ENCODE measurements at regions of chr9 and their contacts with region 1.

Region 1: DNA sequence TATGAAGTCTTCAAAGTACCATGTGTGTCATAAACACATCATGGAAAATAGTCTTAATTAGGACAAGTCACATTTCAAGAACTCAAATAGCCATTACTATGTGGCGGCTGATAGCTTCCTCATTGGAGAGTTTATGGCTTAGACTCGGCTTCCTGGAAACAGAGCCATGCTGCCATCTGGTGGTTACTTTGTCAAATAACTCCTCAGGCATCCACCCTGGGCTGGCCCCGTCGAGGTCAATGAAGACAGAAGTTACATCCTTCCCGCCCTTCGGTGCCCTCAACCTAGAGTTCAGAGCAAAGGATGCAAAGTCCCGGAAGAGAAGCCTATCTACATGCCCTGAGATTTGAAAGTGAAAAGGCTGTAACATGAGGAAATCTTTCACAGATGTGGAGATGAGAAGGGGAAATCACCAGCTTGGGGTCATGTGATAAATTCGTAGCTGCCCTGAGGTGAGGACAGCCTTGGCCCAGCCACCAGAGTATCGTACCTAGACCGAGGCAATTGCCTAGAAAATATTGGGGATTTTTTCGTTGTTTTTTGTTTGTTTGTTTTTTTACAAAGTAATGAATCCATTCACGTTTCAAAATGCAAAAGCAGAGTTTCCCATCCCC is 45.5 kb upstream of the ZNF169 start:
- DNase-seq: peak; percentile 67 to 91 (median 79)
- H3K4me3 ChIP-seq: no peak overlapping the region
- H3K27ac ChIP-seq: no peak overlapping the region
- H3K4me1 ChIP-seq: no peaks in the 10 kb centered on the region
- H3K27me3 ChIP-seq: no peaks in the 10 kb centered on the region
- CTCF ChIP-seq: peak; percentile 57 to 94 (median 86)
- POLR2A ChIP-seq: no peak

Region 2: GRCh38 chr9:93682232-93682968 is 531.2 kb before region 1 on chr9:
- intact Hi-C with region 1: loop called in 1 of 2 experiments (anchors 10 kb)
- DNase-seq: peak; percentile 55 to 82 (median 68)
- H3K4me3 ChIP-seq: no peak overlapping the region
- H3K27ac ChIP-seq: no peak overlapping the region
- H3K4me1 ChIP-seq: no peaks in the 10 kb centered on the region
- H3K27me3 ChIP-seq: no peaks in the 10 kb centered on the region
- CTCF ChIP-seq: peak; percentile 68 to 88 (median 80)
- POLR2A ChIP-seq: no peak

Region 3: GRCh38 chr9:94014065-94014654 is 199.5 kb before region 1 on chr9:
- intact Hi-C with region 1: loop called (anchors 5 to 10 kb)
- DNase-seq: peak in 3 of 7 donors; percentile 12 to 34 (median 25)
- H3K4me3 ChIP-seq: no peak overlapping the region
- H3K27ac ChIP-seq: no peak overlapping the region
- H3K4me1 ChIP-seq: peaks cover 0 to 11% of the 10 kb centered on the region in 2 donors
- H3K27me3 ChIP-seq: no peaks in the 10 kb centered on the region
- CTCF ChIP-seq: peak; percentile 47 to 70 (median 60)
- POLR2A ChIP-seq: no peak

Region 4: DNA sequence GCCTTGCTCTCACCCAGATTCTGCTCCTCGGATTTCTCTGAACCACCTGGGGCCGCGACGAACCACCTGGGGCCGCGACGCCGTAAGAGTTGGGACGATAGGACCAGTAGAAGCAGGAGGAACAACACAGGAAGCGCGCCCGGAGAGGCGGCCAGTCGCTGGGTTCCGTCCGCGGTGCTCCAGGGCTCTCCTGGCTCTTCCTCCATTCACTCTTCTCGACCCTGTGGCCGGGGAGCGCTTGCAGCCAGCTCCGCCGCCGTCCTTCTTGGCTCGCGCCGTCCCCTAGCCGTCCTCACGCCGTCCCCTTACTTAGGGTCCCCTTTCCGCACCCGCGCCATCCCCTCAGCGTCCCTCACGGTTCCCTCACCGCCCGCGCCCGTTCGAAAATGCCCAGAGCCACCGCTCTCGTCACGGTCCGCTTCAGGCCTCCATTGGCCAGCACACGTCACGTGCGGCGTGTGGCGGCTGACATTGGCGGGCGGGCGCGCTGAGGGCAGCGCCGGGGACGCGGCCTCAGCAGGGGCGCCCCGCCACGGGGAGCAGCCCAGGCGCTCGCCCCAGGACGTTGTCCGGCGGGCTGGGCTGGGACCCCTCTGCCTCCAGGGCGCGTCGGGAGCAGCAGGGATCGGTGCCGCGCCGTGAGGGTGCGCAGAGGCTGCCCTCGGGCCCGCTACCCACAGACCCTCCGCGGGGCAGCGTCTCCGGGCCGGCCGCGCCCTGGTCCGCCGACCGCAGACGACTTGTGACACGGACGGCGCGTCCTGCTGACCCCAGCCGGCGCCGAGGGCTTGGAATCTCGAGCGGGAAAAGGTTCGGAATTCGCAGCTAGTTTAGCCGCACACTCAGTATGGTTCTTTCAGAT is 183.1 kb before region 1 on chr9:
- intact Hi-C with region 1: no loop called
- DNase-seq: peak; percentile 82 to 92 (median 88)
- H3K4me3 ChIP-seq: peak overlapping the region; percentile 85 to 88 (median 88)
- H3K27ac ChIP-seq: peak overlapping the region; percentile 24 to 96 (median 85)
- H3K4me1 ChIP-seq: peaks cover 5 to 13% of the 10 kb centered on the region in 2 donors
- H3K27me3 ChIP-seq: no peaks in the 10 kb centered on the region
- CTCF ChIP-seq: no peak
- POLR2A ChIP-seq: peak; percentile 71 to 87

Region 5: GRCh38 chr9:94065535-94065961 is 148.1 kb before region 1 on chr9:
- intact Hi-C with region 1: loop called (anchors 2 to 5 kb)
- DNase-seq: peak; percentile 67 to 91 (median 78)
- H3K4me3 ChIP-seq: no peak overlapping the region
- H3K27ac ChIP-seq: peak overlapping the region in 3 of 5 donors; percentile 37 to 64 (median 58)
- H3K4me1 ChIP-seq: peaks cover 5 to 7% of the 10 kb centered on the region in 2 donors
- H3K27me3 ChIP-seq: no peaks in the 10 kb centered on the region
- CTCF ChIP-seq: peak; percentile 68 to 87 (median 79)
- POLR2A ChIP-seq: no peak

Region 6: DNA sequence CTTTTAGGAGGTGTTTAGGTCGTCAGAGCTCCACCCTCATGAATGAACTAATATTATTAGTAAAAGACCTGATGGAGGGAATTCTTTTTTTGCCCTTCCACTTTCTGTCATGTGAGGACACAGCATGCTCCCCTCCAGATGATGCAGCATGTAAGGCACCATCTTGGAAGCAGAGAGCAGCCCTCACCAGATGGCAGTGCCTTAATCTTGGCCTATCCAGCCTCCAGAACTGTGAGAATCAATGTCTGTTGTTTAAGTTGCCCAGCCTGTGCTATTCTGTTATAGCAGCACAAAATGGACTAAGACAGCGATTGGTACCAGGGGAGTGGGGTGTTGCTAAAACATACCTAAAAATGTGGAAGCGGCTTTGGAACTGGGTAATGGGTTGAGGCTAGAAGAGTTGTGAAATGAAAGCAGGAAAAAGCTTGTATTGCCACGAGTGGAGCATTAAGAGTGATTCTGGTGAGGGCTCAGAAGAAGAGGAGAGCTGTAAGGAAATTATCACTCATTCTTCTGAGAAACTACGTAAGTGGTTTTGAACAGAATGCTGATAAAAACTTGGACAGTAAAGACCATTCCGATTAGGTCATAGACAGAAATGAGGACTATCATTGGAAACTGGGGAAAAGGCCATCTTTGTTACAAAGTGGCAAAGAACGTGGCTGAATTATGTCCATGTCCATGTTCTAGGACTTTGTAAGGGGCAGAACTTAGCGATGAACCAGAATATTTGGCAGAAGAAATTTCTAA is 100.7 kb before region 1 on chr9:
- intact Hi-C with region 1: no loop called
- DNase-seq: no peak
- H3K4me3 ChIP-seq: no peak overlapping the region
- H3K27ac ChIP-seq: no peak overlapping the region
- H3K4me1 ChIP-seq: no peaks in the 10 kb centered on the region
- H3K27me3 ChIP-seq: no peaks in the 10 kb centered on the region
- CTCF ChIP-seq: no peak
- POLR2A ChIP-seq: no peak

Region 7: GRCh38 chr9:94289691-94290090 is 76.1 kb after region 1 on chr9:
- intact Hi-C with region 1: no loop called
- DNase-seq: no peak
- H3K4me3 ChIP-seq: no peak overlapping the region
- H3K27ac ChIP-seq: no peak overlapping the region
- H3K4me1 ChIP-seq: no peaks in the 10 kb centered on the region
- H3K27me3 ChIP-seq: no peaks in the 10 kb centered on the region
- CTCF ChIP-seq: no peak
- POLR2A ChIP-seq: no peak

Measured in adrenal gland (tissue), 19 donors.